Gastrocnemius medialis (tissue), 4 donors: ENCODE measurements at regions of chr7 and their contacts with region 1.

Region 1: GRCh38 chr7:105531792-105532671 is at the start of gene RINT1:
- DNase-seq: peak; percentile 83 to 88
- ATAC-seq: peak; percentile 99 to 100
- H3K4me3 ChIP-seq: peak within 1 kb of the TSS; percentile 88 to 98 (median 95)
- H3K27ac ChIP-seq: peak within 1 kb of the TSS; percentile 85 to 95 (median 89)
- H3K4me1 ChIP-seq: peaks cover 16 to 19% of the 10 kb centered on the region in 2 donors
- H3K27me3 ChIP-seq: no peaks in the 10 kb centered on the region
- CTCF ChIP-seq: peak; percentile 27 to 72 (median 44)
- POLR2A ChIP-seq: peak; percentile 38 to 52
- total RNA-seq, gene RINT1: 18.1 to 29.9 (median 25.7) TPM

Region 2: GRCh38 chr7:105268511-105269392 is 263.3 kb before region 1 on chr7:
- in situ Hi-C with region 1: no loop called
- intact Hi-C with region 1: loop called (anchors 5 kb)
- DNase-seq: peak in 1 of 2 donors; percentile 22
- ATAC-seq: peak; percentile 95 to 96
- H3K4me3 ChIP-seq: peak overlapping the region; percentile 44 to 59 (median 56)
- H3K27ac ChIP-seq: peak overlapping the region; percentile 81 to 87 (median 84)
- H3K4me1 ChIP-seq: peaks cover 19 to 40% of the 10 kb centered on the region in 2 donors
- H3K27me3 ChIP-seq: no peaks in the 10 kb centered on the region
- CTCF ChIP-seq: no peak
- POLR2A ChIP-seq: peak; percentile 31 to 72